ENCODE measurements at regions of chr7 and their contacts with region 1.

Region 1: GRCh38 chr7:22726345-22727185 is 435 bp upstream of the IL6 start:
- DNase-seq: peak; percentile 47
- ATAC-seq: peak; percentile 69
- H3K4me3 Mint-ChIP-seq: peak overlapping the region; percentile 94
- H3K27ac Mint-ChIP-seq: peak overlapping the region; percentile 94
- H3K4me1 Mint-ChIP-seq: peaks cover 88% of the 10 kb centered on the region
- H3K27me3 Mint-ChIP-seq: no peaks in the 10 kb centered on the region
- CTCF ChIP-seq: no peak

Region 2: DNA sequence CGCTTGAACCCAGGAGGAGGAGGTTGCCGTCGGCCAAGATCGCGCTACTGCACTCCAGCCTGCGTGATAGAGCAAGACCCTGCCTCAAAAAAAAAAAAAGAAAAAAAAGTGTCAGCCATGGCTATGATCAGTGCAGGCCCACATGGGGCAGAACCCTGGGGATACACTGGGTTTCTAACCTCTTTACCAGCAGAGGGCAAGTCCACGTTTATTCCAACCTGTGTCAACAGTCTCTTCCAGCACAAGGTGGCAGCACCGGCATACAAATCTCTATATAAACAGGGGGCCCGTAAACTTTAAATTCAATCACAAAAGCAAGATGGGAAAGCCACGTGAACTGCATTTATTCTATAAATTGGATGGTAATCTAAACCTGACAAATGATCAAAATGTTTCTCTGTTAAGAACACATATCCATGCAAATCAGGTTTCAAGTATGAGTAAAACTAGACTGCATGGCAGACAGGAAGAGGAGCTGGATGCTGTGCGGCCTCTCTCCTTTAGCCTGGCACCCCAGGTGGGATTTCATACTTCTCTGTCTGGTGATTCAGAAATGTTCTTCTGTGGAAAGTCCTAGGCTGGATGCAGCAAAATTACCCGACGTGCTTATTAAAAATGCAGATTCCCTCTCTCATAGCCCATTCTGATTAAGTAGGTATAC is 166.6 kb before region 1 on chr7:
- CTCF ChIA-PET with region 1: interaction called, 348 read pairs
- POLR2A ChIA-PET with region 1: interaction called, 180 read pairs
- intact Hi-C with region 1: loop called (anchors 1 kb)
- DNase-seq: peak; percentile 43
- ATAC-seq: peak; percentile 80
- H3K4me3 Mint-ChIP-seq: peak overlapping the region; percentile 36
- H3K27ac Mint-ChIP-seq: peak overlapping the region; percentile 70
- H3K4me1 Mint-ChIP-seq: peaks cover 50% of the 10 kb centered on the region
- H3K27me3 Mint-ChIP-seq: no peaks in the 10 kb centered on the region
- CTCF ChIP-seq: peak; percentile 24

Region 3: GRCh38 chr7:22586786-22587140 is 139.8 kb before region 1 on chr7:
- CTCF ChIA-PET with region 1: interaction called, 6 read pairs
- POLR2A ChIA-PET with region 1: interaction called, 8 read pairs
- intact Hi-C with region 1: loop called (anchors 1 kb)
- DNase-seq: no peak
- ATAC-seq: no peak
- H3K4me3 Mint-ChIP-seq: peak overlapping the region; percentile 67
- H3K27ac Mint-ChIP-seq: peak overlapping the region; percentile 87
- H3K4me1 Mint-ChIP-seq: peaks cover 65% of the 10 kb centered on the region
- H3K27me3 Mint-ChIP-seq: no peaks in the 10 kb centered on the region
- CTCF ChIP-seq: no peak

Region 4: DNA sequence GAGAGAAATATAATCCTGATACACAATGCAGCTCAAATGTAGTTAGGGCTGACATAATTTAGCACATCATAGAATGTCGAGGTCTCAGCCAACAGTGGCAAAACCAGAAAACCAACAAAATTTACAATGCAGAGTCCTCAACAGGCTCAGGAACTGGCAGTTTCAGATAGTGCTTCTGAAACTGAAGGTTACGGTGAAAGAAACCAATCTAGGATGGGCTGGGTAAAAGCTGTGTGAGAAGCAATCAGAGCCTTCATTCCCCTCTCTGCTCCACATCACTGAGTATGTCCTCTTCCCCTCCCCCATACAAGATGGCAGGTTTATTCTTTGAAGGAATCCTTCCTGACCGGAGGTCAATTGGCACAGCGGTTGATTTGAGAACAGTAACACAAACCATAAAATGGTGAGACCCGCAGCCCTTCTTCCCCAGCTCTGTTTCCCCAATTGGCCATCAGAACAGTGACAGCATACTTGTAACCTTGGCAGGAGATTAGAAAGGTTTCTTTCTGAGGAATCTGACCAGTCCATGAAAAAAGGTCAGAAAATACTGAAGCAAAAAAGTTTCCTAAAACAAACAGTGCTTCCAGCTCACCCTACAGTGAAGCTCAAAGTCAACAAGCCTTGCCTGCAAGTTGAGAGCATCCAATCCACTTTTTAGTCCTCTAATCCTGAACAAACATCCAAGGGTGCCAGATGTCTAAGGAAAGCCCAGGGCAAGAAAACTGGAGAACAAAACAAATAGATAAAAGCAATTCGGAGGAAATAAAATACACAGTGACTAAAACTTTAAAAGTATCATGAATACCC is 53.5 kb before region 1 on chr7:
- CTCF ChIA-PET with region 1: interaction called, 39 read pairs
- POLR2A ChIA-PET with region 1: interaction called, 22 read pairs
- intact Hi-C with region 1: loop called (anchors 1 kb)
- DNase-seq: no peak
- ATAC-seq: peak; percentile 57
- H3K4me3 Mint-ChIP-seq: peak overlapping the region; percentile 39
- H3K27ac Mint-ChIP-seq: peak overlapping the region; percentile 89
- H3K4me1 Mint-ChIP-seq: peaks cover 93% of the 10 kb centered on the region
- H3K27me3 Mint-ChIP-seq: no peaks in the 10 kb centered on the region
- CTCF ChIP-seq: no peak

Region 5: GRCh38 chr7:22712999-22713398 is 13.6 kb before region 1 on chr7:
- CTCF ChIA-PET with region 1: interaction called, 9 read pairs
- POLR2A ChIA-PET with region 1: interaction called, 148 read pairs
- intact Hi-C with region 1: loop called (anchors 1 kb)
- DNase-seq: no peak
- ATAC-seq: peak; percentile 85
- H3K4me3 Mint-ChIP-seq: peak overlapping the region; percentile 66
- H3K27ac Mint-ChIP-seq: peak overlapping the region; percentile 98
- H3K4me1 Mint-ChIP-seq: peaks cover 63% of the 10 kb centered on the region
- H3K27me3 Mint-ChIP-seq: no peaks in the 10 kb centered on the region
- CTCF ChIP-seq: no peak

Region 6: DNA sequence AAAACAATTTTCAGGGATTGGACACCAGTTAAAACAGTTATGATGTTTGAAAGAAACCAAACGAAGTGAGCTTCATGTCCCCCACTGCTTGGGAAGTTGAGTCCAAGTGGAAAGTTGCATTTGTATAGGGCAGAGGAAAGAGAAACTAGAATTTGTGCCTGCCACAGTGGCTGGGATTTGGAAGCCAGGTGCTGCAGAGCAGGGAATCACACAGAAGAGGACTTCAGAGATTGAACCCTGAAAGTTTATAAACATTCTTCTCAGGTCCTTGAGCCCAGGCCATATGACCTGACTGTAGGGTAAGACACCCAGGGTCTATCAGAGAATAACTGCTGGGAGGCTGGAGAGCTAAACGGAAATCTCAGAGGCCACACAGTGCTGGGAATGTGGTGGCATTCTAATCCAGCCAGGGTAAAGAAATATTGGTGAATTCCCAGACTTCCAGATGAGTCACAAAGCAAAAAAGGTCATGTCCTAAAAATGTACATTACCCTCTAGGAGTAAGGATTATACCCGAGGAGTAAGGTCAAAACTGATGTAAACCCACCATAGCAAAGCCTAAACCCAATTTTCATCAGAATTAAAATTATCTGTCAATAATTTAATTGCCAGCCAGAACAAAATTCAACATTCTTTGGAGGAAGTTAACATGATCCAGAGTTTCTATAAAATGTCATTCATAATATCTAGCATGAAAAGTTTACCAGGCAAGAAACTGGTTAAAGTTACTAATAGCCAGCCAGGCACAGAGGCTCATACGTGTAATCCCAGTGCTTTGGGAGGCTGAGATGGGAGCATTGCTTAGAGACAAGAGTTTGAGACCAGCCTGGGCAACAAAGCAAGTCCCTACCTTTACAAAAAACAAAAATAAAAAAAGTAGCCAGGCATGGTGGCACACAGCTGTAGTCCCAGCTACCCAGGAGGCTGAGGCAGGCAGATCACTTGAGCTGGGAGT is 64.9 kb after region 1 on chr7:
- CTCF ChIA-PET with region 1: no interaction called
- POLR2A ChIA-PET with region 1: interaction called, 13 read pairs
- intact Hi-C with region 1: no loop called
- DNase-seq: no peak
- ATAC-seq: no peak
- H3K4me3 Mint-ChIP-seq: no peak overlapping the region
- H3K27ac Mint-ChIP-seq: no peak overlapping the region
- H3K4me1 Mint-ChIP-seq: no peaks in the 10 kb centered on the region
- H3K27me3 Mint-ChIP-seq: no peaks in the 10 kb centered on the region
- CTCF ChIP-seq: no peak

Region 7: GRCh38 chr7:23055582-23056178 is 329.1 kb after region 1 on chr7:
- CTCF ChIA-PET with region 1: interaction called, 29 read pairs
- POLR2A ChIA-PET with region 1: interaction called, 3 read pairs
- intact Hi-C with region 1: loop called (anchors 1 kb)
- DNase-seq: no peak
- ATAC-seq: peak; percentile 99
- H3K4me3 Mint-ChIP-seq: no peak overlapping the region
- H3K27ac Mint-ChIP-seq: no peak overlapping the region
- H3K4me1 Mint-ChIP-seq: no peaks in the 10 kb centered on the region
- H3K27me3 Mint-ChIP-seq: no peaks in the 10 kb centered on the region
- CTCF ChIP-seq: peak; percentile 80

Measured in activated B cell treated with CpG ODN at 0.5 μM for 24 hours (primary cell).